ENCODE measurements at regions of chr17 and their contacts with region 1.

Region 1: GRCh38 chr17:75338335-75338734 is 49.1 kb upstream of the SLC25A19 start:
- DNase-seq: no peak
- ATAC-seq: peak in 2 of 8 donors; percentile 24 to 25
- H3K4me3 ChIP-seq: peak overlapping the region in 1 of 10 donors; percentile 1
- H3K27ac ChIP-seq: peak overlapping the region in 6 of 10 donors; percentile 6 to 68 (median 40)
- H3K4me1 ChIP-seq: peaks cover 0 to 90% (median 28%) of the 10 kb centered on the region in 9 donors
- H3K27me3 ChIP-seq: no peaks in the 10 kb centered on the region
- CTCF ChIP-seq: no peak

Region 2: DNA sequence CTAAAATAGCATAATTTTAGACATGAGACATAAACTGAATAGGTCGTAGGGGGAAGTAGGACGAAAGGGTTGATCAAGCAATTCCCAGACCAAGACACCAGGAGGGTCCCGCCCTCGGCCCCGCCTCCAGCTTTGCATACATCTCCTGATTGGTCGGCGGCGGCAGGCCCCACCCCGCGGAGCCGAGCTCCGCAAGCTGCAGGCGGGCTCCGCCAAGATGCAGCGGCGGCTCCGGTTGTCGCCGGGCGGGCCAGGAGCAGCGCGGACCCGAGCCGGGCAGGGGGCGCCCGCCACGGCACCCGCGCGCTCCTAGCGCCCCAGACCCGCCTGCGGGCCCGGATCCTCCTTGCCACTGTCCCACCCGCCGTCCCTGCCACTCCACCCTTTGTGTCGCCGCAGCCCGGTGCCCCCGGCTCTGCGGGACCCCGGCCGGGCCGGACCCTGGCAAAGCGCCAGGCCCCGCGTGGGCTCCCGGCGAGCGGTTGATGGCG is 350.9 kb before region 1 on chr17 and contains the start of gene CDR2L:
- intact Hi-C with region 1: no loop called
- DNase-seq: peak; percentile 96 to 97
- ATAC-seq: peak; percentile 87 to 94 (median 92)
- H3K4me3 ChIP-seq: peak within 1 kb of the TSS; percentile 63 to 92 (median 80)
- H3K27ac ChIP-seq: peak within 1 kb of the TSS; percentile 87 to 100 (median 98)
- H3K4me1 ChIP-seq: peaks cover 0 to 52% (median 30%) of the 10 kb centered on the region in 9 donors
- H3K27me3 ChIP-seq: peaks cover 0 to 17% (median 0%) of the 10 kb centered on the region in 7 donors
- CTCF ChIP-seq: no peak
- total RNA-seq, gene CDR2L: 10.8 to 25.3 (median 16.3) TPM

Region 3: DNA sequence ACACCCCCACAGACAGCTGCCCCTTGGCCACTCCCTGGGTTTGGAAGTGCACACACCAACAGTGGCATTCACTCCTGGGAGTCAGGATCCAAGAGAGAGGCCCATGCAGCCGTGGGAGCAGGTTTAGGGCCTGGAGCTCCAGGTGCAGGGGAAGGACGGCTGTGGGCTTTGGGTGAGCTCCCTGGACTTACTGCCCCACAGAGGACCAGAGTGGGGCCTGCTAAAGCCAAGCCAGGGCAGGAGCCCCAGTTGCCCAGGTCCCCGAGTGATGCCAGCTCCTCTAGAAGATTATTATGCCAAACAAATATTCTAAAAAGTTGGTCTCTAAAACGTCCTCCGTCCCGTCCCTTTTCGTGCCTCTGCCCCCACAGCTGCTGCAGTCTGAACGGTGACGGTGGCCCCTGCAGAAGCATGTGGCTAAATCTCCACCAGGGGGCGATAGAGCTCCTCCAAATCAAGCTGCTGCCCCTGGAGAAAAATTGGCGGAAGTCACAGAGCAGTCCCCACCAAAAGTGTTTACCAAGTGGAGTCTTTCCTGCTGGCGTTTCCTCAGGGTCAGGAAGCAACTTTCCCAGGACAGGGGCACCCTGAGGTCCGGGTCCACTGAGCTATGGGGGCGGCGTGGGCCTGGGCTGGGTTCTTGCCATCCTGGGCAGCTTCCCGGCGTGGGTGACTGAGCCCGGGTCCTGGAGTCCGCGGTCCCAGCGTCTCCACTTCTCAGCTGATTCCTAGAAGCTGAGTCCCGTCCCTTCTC is 224.4 kb before region 1 on chr17:
- intact Hi-C with region 1: no loop called
- DNase-seq: peak; percentile 76 to 94
- ATAC-seq: peak; percentile 75 to 90 (median 83)
- H3K4me3 ChIP-seq: peak overlapping the region; percentile 14 to 66 (median 58)
- H3K27ac ChIP-seq: peak overlapping the region; percentile 55 to 96 (median 90)
- H3K4me1 ChIP-seq: peaks cover 5 to 66% (median 40%) of the 10 kb centered on the region in 9 donors
- H3K27me3 ChIP-seq: no peaks in the 10 kb centered on the region
- CTCF ChIP-seq: peak; percentile 94 to 98 (median 95)

Region 4: GRCh38 chr17:75277664-75278071 is 60.7 kb before region 1 on chr17:
- intact Hi-C with region 1: no loop called
- DNase-seq: no peak
- ATAC-seq: no peak
- H3K4me3 ChIP-seq: no peak overlapping the region
- H3K27ac ChIP-seq: no peak overlapping the region
- H3K4me1 ChIP-seq: peaks cover 0 to 13% (median 7%) of the 10 kb centered on the region in 9 donors
- H3K27me3 ChIP-seq: no peaks in the 10 kb centered on the region
- CTCF ChIP-seq: no peak

Region 5: DNA sequence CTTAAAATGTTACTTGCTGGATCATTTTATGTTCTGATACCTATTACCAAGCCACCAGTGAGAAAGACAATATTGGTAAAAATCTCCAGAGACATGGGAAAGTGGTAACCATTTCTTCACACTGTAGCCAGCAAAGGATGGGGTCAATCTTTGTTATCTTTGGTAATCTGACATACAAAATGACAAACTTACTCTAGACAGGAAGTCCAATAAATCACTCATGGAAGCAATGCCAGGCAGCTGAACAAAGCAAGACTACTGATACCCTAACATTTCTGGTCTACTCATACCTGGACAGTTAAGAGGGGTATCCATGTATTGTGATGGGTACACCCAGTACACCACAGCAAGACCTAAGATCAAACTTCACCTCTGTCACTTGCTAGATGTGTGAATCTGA is 48.1 kb after region 1 on chr17:
- intact Hi-C with region 1: loop called in 2 of 10 experiments (anchors 5 kb)
- DNase-seq: no peak
- ATAC-seq: no peak
- H3K4me3 ChIP-seq: no peak overlapping the region
- H3K27ac ChIP-seq: no peak overlapping the region
- H3K4me1 ChIP-seq: peaks cover 0 to 82% (median 13%) of the 10 kb centered on the region in 9 donors
- H3K27me3 ChIP-seq: no peaks in the 10 kb centered on the region
- CTCF ChIP-seq: no peak

Measured in heart right ventricle (tissue), 16 donors.